PC-9 (cell line): ENCODE measurements at regions of chr11 and their contacts with region 1.

Region 1: GRCh38 chr11:8911029-8911826 is at the start of gene AKIP1:
- DNase-seq: peak; percentile 64 to 86
- H3K4me3 ChIP-seq: peak within 1 kb of the TSS; percentile 88
- H3K27ac ChIP-seq: no peak within 1 kb of the TSS
- H3K4me1 ChIP-seq: peaks cover 18% of the 10 kb centered on the region
- H3K27me3 ChIP-seq: no peaks in the 10 kb centered on the region
- CTCF ChIP-seq: no peak
- total RNA-seq, gene AKIP1: 16.7 and 17.7 TPM in 2 replicates

Region 2: GRCh38 chr11:8258784-8259183 is 652.4 kb before region 1 on chr11:
- CTCF ChIA-PET with region 1: no interaction called
- POLR2A ChIA-PET with region 1: no interaction called
- intact Hi-C with region 1: no loop called
- DNase-seq: peak in 1 of 2 experiments; percentile 66
- H3K4me3 ChIP-seq: no peak overlapping the region
- H3K27ac ChIP-seq: no peak overlapping the region
- H3K4me1 ChIP-seq: 0 out of 2 replicates have a peak, but pooled peaks cover 4% of the 10 kb centered on the region
- H3K27me3 ChIP-seq: no peaks in the 10 kb centered on the region
- CTCF ChIP-seq: no peak

Region 3: GRCh38 chr11:8342821-8343681 is 568.2 kb before region 1 on chr11:
- CTCF ChIA-PET with region 1: no interaction called
- POLR2A ChIA-PET with region 1: no interaction called
- intact Hi-C with region 1: loop called (anchors 2 kb)
- DNase-seq: peak; percentile 68 to 82
- H3K4me3 ChIP-seq: no peak overlapping the region
- H3K27ac ChIP-seq: no peak overlapping the region
- H3K4me1 ChIP-seq: peaks cover 29% of the 10 kb centered on the region
- H3K27me3 ChIP-seq: no peaks in the 10 kb centered on the region
- CTCF ChIP-seq: no peak

Region 4: DNA sequence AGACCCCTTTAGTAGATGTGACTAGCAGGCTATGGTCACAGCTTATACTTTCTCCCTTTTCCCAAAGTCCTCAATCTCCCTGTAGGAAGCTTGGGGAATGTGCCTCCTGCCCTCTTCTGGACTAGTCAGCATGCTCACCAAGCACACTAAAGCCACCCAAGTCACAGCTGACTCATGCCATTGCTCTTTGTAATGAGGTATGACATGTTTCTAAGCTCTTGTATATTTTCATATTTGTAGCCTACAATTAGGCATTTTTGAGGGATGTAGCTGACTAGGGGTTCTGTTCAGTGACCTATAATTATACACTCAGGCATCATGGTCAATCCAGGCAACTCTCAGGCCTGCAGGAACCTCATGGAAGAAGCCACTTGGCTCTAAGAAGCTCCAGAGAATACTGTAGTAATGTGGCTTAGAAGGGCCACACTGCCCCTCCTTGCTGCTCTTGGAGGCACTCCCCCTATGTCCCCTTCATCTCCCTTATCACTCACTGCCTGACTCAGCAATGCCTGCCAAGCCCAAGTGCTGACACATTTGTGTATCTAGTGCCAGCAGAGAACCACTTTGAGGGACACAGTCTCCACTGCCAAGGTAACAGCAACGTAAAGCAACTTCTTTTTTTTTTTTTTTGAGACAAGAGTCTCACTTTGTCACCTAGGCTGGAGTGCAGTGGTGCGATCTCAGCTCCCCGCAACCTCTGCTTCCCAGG is 142.4 kb before region 1 on chr11:
- CTCF ChIA-PET with region 1: no interaction called
- POLR2A ChIA-PET with region 1: no interaction called
- intact Hi-C with region 1: loop called (anchors 2 kb)
- DNase-seq: peak; percentile 15 to 61
- H3K4me3 ChIP-seq: no peak overlapping the region
- H3K27ac ChIP-seq: peak overlapping the region; percentile 66
- H3K4me1 ChIP-seq: peaks cover 30% of the 10 kb centered on the region
- H3K27me3 ChIP-seq: no peaks in the 10 kb centered on the region
- CTCF ChIP-seq: peak; percentile 28; the same call in 1 of the 2 replicates

Region 5: GRCh38 chr11:8813658-8814057 is 97.6 kb before region 1 on chr11:
- CTCF ChIA-PET with region 1: no interaction called
- POLR2A ChIA-PET with region 1: no interaction called
- intact Hi-C with region 1: loop called (anchors 2 kb)
- DNase-seq: peak; percentile 49 to 63
- H3K4me3 ChIP-seq: no peak overlapping the region
- H3K27ac ChIP-seq: peak overlapping the region; percentile 81
- H3K4me1 ChIP-seq: peaks cover 41% of the 10 kb centered on the region
- H3K27me3 ChIP-seq: no peaks in the 10 kb centered on the region
- CTCF ChIP-seq: peak; percentile 78

Region 6: GRCh38 chr11:8870411-8871170 is 40.6 kb before region 1 on chr11:
- CTCF ChIA-PET with region 1: interaction called, 3 read pairs
- POLR2A ChIA-PET with region 1: no interaction called
- intact Hi-C with region 1: loop called (anchors 5 kb)
- DNase-seq: peak; percentile 41 to 53
- H3K4me3 ChIP-seq: peak overlapping the region; percentile 60
- H3K27ac ChIP-seq: no peak overlapping the region
- H3K4me1 ChIP-seq: peaks cover 45% of the 10 kb centered on the region
- H3K27me3 ChIP-seq: no peaks in the 10 kb centered on the region
- CTCF ChIP-seq: no peak

Region 7: DNA sequence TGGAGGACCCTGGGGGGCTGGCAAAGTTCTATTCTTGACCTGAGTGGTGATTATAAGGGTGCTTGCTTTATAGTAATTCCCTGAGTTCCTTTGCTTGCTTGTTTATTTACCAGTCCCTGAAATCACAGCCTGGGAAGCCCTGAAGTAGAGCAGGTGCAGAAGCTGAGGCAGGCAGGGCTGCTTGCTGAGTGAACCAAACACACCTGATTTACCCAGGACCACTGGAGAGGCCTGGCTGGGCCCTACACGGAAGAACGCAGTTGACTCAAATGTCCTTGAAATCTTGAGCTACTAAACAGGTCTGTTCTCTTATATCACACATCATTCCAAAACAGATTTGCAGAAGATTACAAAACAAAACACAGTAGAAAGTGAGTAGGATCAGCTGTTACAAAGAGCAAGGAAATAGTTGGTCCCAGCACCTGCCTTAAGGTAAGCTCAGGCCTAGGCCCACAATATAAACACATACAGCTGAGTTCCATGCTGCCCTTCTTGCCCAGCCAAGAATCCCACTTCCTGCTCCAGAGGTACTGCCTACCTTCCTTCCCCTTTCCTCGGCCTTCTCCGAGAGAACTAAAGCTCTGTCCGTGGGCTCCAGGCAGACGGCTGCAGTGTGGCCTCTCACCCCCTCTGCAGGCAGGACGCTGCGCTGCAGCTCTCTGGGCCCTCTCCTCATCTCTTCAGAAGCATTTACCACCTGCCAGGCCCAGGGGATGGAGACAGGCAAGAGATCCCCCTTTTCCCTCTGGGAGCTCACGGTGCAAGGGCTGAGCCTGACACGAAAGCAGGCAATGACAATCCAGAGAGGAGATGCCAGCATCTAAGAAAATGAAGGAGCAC is 226.3 kb after region 1 on chr11:
- CTCF ChIA-PET with region 1: interaction called, 3 read pairs
- POLR2A ChIA-PET with region 1: no interaction called
- intact Hi-C with region 1: loop called (anchors 5 kb)
- DNase-seq: peak; percentile 56 to 71
- H3K4me3 ChIP-seq: no peak overlapping the region
- H3K27ac ChIP-seq: no peak overlapping the region
- H3K4me1 ChIP-seq: peaks cover 40% of the 10 kb centered on the region
- H3K27me3 ChIP-seq: no peaks in the 10 kb centered on the region
- CTCF ChIP-seq: peak; percentile 92